Thyroid gland (tissue), 4 donors: ENCODE measurements at regions of chr14 and their contacts with region 1.

Region 1: DNA sequence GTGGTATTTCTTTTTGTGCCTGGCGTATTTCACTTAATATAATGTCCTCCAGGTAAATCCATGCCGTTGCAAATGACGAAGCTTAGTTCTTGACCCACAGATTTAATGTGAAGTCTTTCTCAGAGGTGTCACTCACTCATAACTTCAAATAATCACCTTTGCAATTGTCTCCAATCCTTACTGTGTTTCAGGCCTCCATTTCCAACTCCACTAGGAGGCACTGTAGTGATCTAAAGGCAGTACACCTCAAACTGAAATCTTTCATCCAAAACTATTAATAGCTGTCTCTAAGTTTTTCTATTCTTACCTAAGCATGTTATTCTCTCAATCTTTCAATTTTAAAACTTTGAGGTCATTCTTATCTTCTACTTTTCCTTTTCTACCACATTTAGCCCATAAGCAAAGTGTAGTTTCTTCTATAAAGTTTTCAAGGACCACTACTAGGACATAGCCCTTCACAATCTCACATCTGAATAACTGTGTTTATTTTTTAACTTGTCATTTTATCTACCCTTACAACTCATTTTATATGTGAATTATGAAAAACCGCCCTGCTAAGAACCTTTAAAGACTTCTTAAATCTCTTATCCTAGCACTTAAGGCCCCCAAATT is 25.5 kb upstream of the FBXO34 start:
- DNase-seq: peak; percentile 34 to 35
- H3K4me3 ChIP-seq: no peak overlapping the region
- H3K27ac ChIP-seq: no peak overlapping the region
- H3K4me1 ChIP-seq: peaks cover 5 to 9% of the 10 kb centered on the region in 2 donors
- H3K27me3 ChIP-seq: no peaks in the 10 kb centered on the region
- CTCF ChIP-seq: peak in 4 of 6 experiments; percentile 58 to 78 (median 70)
- POLR2A ChIP-seq: no peak

Region 2: GRCh38 chr14:55062517-55063351 is 183.0 kb before region 1 on chr14:
- intact Hi-C with region 1: no loop called
- DNase-seq: peak; percentile 59 to 70
- H3K4me3 ChIP-seq: no peak overlapping the region
- H3K27ac ChIP-seq: peak overlapping the region in 1 of 3 donors; percentile 30
- H3K4me1 ChIP-seq: peaks cover 12 to 14% of the 10 kb centered on the region in 2 donors
- H3K27me3 ChIP-seq: no peaks in the 10 kb centered on the region
- CTCF ChIP-seq: no peak
- POLR2A ChIP-seq: no peak

Region 3: GRCh38 chr14:55294603-55295002 is 48.8 kb after region 1 on chr14:
- intact Hi-C with region 1: no loop called
- DNase-seq: no peak
- H3K4me3 ChIP-seq: no peak overlapping the region
- H3K27ac ChIP-seq: no peak overlapping the region
- H3K4me1 ChIP-seq: peaks cover 28 to 32% of the 10 kb centered on the region in 2 donors
- H3K27me3 ChIP-seq: no peaks in the 10 kb centered on the region
- CTCF ChIP-seq: no peak
- POLR2A ChIP-seq: no peak

Region 4: GRCh38 chr14:55333711-55334485 is 88.1 kb after region 1 on chr14:
- intact Hi-C with region 1: no loop called
- DNase-seq: no peak
- H3K4me3 ChIP-seq: no peak overlapping the region
- H3K27ac ChIP-seq: peak overlapping the region; percentile 33 to 64 (median 53)
- H3K4me1 ChIP-seq: peaks cover 38 to 74% of the 10 kb centered on the region in 2 donors
- H3K27me3 ChIP-seq: no peaks in the 10 kb centered on the region
- CTCF ChIP-seq: no peak
- POLR2A ChIP-seq: no peak

Region 5: DNA sequence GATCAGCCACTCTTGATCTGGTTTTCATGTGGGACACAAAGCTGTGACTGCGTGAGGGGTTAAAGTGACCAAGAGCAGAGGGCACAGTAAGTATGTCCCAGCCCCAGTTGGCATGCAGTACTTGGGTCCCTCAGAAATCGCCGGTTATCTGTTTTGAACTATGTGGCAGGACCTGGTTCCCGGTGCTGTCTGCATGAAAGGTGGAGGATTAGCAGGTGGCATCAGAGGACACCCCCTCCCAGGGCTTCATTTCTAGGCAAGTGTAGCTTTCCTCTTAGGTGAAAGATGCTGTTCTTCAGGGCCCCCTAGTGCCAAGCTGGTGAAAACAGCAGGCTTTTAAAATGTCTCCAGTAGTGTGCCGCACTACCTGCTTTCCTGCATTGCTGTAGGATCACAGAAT is 108.7 kb after region 1 on chr14:
- intact Hi-C with region 1: loop called (anchors 10 kb)
- DNase-seq: peak; percentile 61 to 68
- H3K4me3 ChIP-seq: no peak overlapping the region
- H3K27ac ChIP-seq: peak overlapping the region; percentile 11 to 40 (median 14)
- H3K4me1 ChIP-seq: peaks cover 23 to 39% of the 10 kb centered on the region in 2 donors
- H3K27me3 ChIP-seq: no peaks in the 10 kb centered on the region
- CTCF ChIP-seq: peak; percentile 33 to 84 (median 58)
- POLR2A ChIP-seq: no peak

Region 6: GRCh38 chr14:55546212-55546874 is 300.6 kb after region 1 on chr14:
- intact Hi-C with region 1: no loop called
- DNase-seq: no peak
- H3K4me3 ChIP-seq: no peak overlapping the region
- H3K27ac ChIP-seq: no peak overlapping the region
- H3K4me1 ChIP-seq: no peaks in the 10 kb centered on the region
- H3K27me3 ChIP-seq: no peaks in the 10 kb centered on the region
- CTCF ChIP-seq: no peak
- POLR2A ChIP-seq: no peak